Activated CD4-positive, alpha-beta memory T cell treated with anti-CD3 and anti-CD28 coated beads, Interleukin-2, amount 10 ng/mL, durations not matched to agents 7 days and 5 days (primary cell): ENCODE measurements at regions of chr2 and their contacts with region 1.

Region 1: DNA sequence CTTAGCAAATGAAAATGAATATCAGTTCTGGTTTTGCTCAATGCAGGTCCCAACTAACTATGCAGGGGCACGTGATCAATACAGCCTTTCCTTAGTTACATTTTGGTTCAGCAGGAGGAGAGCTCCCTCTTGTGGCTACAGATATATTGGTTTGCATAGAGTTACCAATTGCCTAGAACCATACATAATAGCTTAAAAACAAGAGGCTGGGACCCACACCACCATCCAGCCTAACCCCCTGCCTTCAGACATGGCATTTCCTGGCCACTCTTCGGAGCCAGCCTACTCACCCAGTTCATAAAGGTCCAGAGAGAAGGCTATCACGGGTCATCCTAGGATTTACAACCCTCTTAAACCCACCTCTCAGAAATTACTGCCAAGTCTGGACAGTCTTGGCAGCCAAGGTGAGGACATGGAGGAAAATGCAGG is 10.5 kb downstream of the CCDC93 start:
- DNase-seq: peak; percentile 51
- H3K4me3 Mint-ChIP-seq: no peak overlapping the region
- H3K27ac Mint-ChIP-seq: peak overlapping the region; percentile 41
- H3K4me1 Mint-ChIP-seq: peaks cover 14% of the 10 kb centered on the region
- H3K27me3 Mint-ChIP-seq: no peaks in the 10 kb centered on the region

Region 2: GRCh38 chr2:117835990-117836760 is 167.2 kb before region 1 on chr2:
- CTCF ChIA-PET with region 1: interaction called, 29 read pairs
- POLR2A ChIA-PET with region 1: no interaction called
- DNase-seq: peak; percentile 51
- H3K4me3 Mint-ChIP-seq: peak overlapping the region; percentile 35
- H3K27ac Mint-ChIP-seq: no peak overlapping the region
- H3K4me1 Mint-ChIP-seq: peaks cover 4% of the 10 kb centered on the region
- H3K27me3 Mint-ChIP-seq: no peaks in the 10 kb centered on the region

Region 3: GRCh38 chr2:117956036-117956796 is 47.2 kb before region 1 on chr2:
- CTCF ChIA-PET with region 1: interaction called, 18 read pairs
- POLR2A ChIA-PET with region 1: no interaction called
- DNase-seq: no peak
- H3K4me3 Mint-ChIP-seq: no peak overlapping the region
- H3K27ac Mint-ChIP-seq: no peak overlapping the region
- H3K4me1 Mint-ChIP-seq: no peaks in the 10 kb centered on the region
- H3K27me3 Mint-ChIP-seq: no peaks in the 10 kb centered on the region

Region 4: DNA sequence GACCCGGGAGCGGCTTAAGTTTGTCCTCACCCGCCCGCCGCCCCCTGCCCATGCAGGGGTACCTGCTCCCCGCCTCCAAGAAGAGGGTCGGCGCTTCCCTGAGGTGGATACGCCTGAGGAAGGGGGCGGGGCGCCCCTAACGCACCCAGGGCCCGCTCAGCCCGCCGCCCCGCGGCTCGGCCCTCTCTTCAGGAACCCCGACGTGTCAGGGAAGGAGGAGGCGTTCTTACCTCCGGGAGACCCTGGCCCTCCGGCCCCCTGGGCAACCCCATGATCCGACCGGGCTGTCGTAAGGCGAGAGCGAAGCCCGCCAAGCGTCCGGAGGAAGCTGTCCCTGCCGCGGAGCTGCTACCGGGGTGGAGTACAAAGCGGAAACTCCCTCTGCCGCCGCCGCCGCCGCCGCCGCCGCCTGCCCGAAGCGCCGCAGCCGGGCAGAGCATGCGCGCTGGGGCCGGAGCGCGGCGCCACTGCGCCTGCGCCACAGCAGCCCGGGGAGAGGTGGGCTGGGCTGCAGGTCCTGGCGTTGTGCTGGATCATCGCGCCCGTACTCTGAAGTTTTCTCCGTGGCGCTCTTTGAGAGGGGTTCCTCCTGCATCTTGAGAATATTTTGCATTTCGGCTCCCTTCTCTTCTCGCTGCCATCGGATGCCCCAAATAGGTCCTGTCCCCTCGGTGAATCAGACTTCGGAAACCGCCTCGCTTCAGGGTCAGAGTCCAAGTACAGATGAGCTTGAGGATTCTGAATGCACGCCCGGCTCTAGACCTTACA is 10.5 kb after region 1 on chr2 and contains the start of gene CCDC93:
- CTCF ChIA-PET with region 1: interaction called, 52 read pairs
- POLR2A ChIA-PET with region 1: interaction called, 19 read pairs
- DNase-seq: peak; percentile 88
- H3K4me3 Mint-ChIP-seq: peak within 1 kb of the TSS; percentile 93
- H3K27ac Mint-ChIP-seq: peak within 1 kb of the TSS; percentile 84
- H3K4me1 Mint-ChIP-seq: peaks cover 51% of the 10 kb centered on the region
- H3K27me3 Mint-ChIP-seq: peaks cover 4% of the 10 kb centered on the region
- total RNA-seq, gene CCDC93: 35.0 to 35.6 TPM